GM13977 (cell line): ENCODE measurements at regions of chr13 and their contacts with region 1.

Region 1: DNA sequence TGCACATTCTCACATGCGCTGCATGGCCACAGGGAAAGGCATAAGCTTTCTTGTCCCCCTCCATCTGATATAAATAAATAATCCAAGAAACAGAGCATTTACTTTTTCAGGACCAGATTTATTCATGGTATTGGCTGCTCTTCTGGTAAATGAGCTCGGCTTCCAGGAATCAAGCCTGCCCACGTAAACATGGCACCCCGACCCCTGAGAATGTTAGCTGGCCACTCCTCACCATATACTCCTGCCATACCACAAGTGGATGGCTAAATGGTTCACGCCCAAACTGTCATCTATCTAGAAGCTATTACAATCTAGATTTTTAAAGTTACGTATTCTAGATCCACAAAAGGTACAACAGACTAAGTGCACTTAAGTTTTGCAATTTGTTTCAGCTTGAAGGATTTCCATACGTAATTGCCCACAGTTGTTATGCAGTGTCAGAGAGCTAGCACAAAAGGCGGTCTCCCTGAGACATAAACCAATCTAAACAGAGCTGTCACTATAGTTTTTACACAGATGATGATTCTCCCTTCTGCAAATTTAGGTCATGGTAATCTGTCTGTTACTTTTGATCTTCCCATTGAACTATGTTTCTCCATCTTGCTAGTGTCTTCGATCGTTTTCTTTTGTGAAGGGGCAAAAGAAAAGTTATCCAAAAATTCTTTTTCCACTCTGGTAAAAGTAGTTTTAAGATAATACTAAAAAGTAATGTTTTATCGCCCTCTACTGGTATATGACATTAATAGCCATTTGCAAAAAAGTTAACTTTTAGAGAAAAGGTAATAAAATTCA is 16.2 kb upstream of the FOXO1 start:
- DNase-seq: no peak
- CTCF ChIP-seq: peak; percentile 52

Region 2: DNA sequence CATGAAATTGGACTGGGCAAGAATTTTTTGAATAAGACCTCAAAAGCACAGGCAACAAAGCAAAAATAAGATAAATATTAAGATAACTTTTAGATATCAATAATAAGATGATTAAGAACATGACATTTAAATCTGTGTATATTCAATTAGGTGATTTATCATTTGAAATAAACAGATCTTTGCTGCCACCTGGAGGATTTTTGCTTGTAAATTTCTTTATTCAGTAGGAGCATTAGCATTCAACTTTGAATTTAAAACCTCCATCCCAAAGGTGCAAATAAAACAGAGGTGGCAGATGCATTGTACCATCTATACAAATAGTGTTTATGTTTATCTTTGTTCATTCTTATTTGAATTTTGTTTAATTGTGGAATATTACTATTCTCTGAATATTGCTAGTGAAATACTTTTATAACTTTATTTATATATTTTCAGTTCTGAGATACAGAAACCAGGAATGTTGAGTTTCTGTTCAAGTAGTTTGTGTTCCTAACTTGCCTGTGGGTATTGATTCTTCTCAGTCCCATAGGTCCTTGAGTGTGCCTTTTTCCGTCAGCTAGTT is 1006.2 kb before region 1 on chr13:
- in situ Hi-C with region 1: loop called (anchors 25 kb)
- DNase-seq: peak; percentile 12
- CTCF ChIP-seq: peak; percentile 38

Region 3: DNA sequence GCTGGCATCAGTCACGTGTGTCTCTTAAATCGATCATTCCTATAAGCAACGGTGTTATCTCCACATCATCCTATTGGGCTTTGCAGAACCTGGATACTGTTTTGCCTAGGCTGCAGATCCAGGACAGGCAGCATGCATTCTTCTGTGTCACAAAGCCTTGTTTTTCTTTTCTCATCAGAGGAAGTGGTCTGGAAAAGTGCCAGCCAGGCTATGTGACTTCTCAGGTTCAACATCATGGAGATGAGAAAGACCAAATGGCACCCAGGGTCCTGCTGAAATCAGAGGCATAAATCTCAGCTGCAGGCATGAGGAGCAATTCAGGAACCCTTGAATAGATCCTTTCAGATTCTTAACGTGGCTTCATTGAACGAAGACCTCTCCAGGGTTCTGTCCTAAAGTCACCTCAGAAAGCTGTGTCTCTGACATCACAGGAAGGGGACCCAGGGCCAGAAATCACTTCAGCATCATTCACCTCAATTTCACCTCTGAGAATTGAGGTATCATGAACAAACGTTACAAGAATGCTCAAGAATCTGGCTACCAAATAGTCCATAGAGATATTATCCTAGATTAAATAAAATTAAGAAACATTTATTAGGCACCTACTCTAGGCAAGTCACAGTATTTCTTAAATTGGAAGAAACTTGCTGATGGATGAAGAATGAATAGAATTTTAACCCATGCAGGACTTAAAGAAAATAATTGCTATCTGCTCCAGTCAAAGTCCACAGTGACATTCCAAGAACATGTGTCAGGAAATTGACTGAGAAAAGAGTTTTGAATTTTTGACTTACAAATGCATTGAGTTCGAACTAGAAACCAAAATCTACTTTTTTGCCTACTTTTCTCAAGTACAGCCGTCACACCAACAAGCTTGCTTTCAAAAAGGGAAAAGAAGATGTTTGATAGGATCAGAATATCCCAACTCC is 903.0 kb before region 1 on chr13:
- in situ Hi-C with region 1: no loop called
- DNase-seq: no peak
- CTCF ChIP-seq: no peak

Region 4: DNA sequence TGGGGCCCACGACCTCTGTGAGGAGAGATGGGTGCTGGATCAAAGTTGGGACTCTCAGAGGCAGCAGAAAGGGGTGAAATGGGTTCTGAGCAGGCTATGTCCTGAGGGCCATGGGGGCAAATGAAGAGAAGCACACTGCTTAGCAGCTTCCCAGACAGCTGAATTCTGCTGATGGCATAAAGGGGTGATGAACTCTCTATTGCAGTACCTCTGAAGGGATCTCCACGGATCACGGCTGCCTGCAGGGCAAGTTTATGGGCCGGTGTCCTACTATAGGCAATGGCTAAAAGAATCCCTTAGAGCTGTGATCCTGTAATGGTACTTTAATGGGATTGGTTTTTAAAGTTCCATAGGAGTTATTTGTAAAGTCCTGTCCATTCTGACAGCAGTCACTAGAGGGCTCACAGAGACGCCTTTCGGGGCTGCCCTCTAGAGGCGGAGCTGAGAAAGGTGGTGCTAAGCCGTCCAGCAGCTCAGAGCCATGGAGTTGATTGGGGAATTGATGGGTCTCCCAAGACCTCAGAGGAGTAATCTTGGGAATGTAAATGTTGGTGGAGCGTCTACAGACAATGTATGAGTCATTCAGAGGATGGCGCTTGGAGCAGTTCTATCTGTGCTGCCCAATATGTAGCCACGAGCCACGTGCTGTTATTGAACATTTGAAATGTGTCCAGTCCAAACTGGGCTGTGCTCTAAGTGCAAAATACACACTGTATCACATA is 739.9 kb before region 1 on chr13:
- in situ Hi-C with region 1: loop called (anchors 10 kb)
- DNase-seq: peak; percentile 59
- CTCF ChIP-seq: peak; percentile 99

Region 5: DNA sequence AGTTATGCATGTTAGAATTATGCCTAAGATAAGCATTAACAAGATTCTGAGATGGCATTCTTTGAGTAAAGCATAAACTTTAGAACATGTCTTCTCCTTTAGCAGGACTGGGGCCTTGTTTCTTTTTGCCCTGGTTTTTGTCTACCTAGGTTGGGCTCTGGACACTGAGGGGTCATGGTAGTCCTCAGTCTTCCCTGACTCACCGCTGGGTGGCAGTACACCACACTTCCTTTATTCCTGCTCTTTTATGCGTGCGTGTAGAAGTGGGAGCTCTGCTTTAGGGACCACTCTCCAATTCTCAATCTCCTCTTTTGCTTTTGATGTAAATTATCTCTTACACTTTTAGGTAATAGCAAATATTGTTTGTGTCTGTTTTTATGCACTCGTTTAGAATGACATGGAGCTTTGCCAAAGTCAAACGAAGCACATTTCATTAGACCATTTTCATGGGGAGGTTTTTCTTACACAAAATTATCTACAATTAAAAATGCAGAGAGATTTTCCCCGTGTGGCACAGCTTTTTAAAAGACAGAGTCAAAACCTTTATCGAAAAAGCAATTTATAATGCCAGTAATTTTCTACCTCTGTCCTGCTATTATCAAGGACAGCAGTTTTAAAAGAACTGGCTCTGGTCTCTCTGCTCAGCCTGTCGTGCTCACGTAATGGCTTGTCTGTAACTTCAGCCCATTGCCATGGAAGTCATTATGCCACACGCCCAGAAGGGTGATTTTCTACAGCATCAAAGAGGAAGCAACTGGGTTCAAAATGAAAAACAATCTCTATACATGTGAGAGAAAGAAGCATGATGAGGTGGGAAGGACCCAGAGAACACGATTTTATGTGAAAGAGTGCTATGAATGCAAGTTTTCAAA is 613.2 kb before region 1 on chr13:
- in situ Hi-C with region 1: loop called (anchors 10 kb)
- DNase-seq: peak; percentile 45
- CTCF ChIP-seq: peak; percentile 85

Region 6: DNA sequence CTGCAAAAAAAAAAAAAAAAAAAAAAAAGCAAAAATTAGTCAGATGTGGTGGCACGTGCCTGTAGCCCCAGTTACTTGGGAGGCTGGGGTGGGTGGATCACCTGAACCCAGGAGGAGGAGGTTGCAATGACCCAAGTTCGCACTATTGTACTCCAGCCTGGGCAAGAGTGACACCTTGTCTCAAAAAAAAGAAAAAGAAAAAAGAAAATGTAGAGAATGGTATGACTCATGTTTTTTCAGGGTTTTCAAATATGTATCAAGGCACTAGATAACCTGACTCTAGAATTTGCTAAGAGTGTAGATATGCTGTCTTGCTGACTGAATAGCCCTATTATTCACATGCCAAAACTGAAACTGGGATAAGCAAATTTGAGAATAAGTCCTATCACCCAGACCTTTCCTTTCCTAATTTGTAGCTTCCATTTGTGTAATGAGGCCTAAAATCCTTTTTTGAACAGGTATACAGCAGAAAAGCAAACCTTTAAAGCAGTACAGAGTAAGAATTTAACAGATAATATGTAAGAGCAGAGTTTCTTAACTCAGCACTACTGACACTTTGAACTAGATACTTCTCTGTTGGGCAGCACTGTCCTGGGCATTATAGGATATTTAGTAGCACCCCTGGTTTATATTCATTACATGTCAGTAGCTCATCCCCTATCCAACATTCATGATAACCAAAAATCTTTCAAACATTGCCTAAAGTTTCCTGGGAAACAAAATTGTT is 227.8 kb after region 1 on chr13:
- in situ Hi-C with region 1: no loop called
- DNase-seq: peak; percentile 35
- CTCF ChIP-seq: no peak